CD4-positive, alpha-beta T cell (primary cell): ENCODE measurements at regions of chr15 and their contacts with region 1.

Region 1: GRCh38 chr15:64010719-64011118 is 35.6 kb downstream of the DAPK2 start:
- DNase-seq: peak; percentile 75 to 95 (median 83)
- ATAC-seq: peak; percentile 93
- H3K4me3 ChIP-seq: no peak overlapping the region
- H3K4me3 Mint-ChIP-seq: peak overlapping the region; percentile 66
- H3K27ac ChIP-seq: peak overlapping the region; percentile 64 to 72
- H3K27ac Mint-ChIP-seq: peak overlapping the region; percentile 93
- H3K4me1 ChIP-seq: peaks cover 38% of the 10 kb centered on the region
- H3K4me1 Mint-ChIP-seq: peaks cover 41% of the 10 kb centered on the region
- H3K27me3 ChIP-seq: no peaks in the 10 kb centered on the region
- H3K27me3 Mint-ChIP-seq: no peaks in the 10 kb centered on the region
- CTCF ChIP-seq: peak; percentile 52

Region 2: GRCh38 chr15:63752075-63752684 is 258.5 kb before region 1 on chr15:
- CTCF ChIA-PET with region 1: interaction called, 7 read pairs
- POLR2A ChIA-PET with region 1: interaction called, 16 read pairs
- intact Hi-C with region 1: loop called (anchors 2 kb)
- DNase-seq: peak in 9 of 14 experiments; percentile 15 to 74 (median 24)
- ATAC-seq: peak; percentile 73
- H3K4me3 ChIP-seq: no peak overlapping the region
- H3K4me3 Mint-ChIP-seq: no peak overlapping the region
- H3K27ac ChIP-seq: no peak overlapping the region
- H3K27ac Mint-ChIP-seq: peak overlapping the region; percentile 3
- H3K4me1 ChIP-seq: no peaks in the 10 kb centered on the region
- H3K4me1 Mint-ChIP-seq: peaks cover 6% of the 10 kb centered on the region
- H3K27me3 ChIP-seq: no peaks in the 10 kb centered on the region
- H3K27me3 Mint-ChIP-seq: no peaks in the 10 kb centered on the region
- CTCF ChIP-seq: peak; percentile 80

Region 3: GRCh38 chr15:63826528-63826927 is 184.2 kb before region 1 on chr15:
- CTCF ChIA-PET with region 1: no interaction called
- POLR2A ChIA-PET with region 1: interaction called, 10 read pairs
- intact Hi-C with region 1: loop called (anchors 5 kb)
- DNase-seq: peak in 4 of 14 experiments; percentile 45 to 75 (median 66)
- ATAC-seq: no peak
- H3K4me3 ChIP-seq: no peak overlapping the region
- H3K4me3 Mint-ChIP-seq: peak overlapping the region; percentile 74
- H3K27ac ChIP-seq: no peak overlapping the region
- H3K27ac Mint-ChIP-seq: peak overlapping the region; percentile 62
- H3K4me1 ChIP-seq: peaks cover 21% of the 10 kb centered on the region
- H3K4me1 Mint-ChIP-seq: peaks cover 91% of the 10 kb centered on the region
- H3K27me3 ChIP-seq: no peaks in the 10 kb centered on the region
- H3K27me3 Mint-ChIP-seq: no peaks in the 10 kb centered on the region
- CTCF ChIP-seq: peak; percentile 62

Region 4: GRCh38 chr15:63945007-63945788 is 65.5 kb before region 1 on chr15:
- CTCF ChIA-PET with region 1: interaction called, 23 read pairs
- POLR2A ChIA-PET with region 1: interaction called, 3 read pairs
- intact Hi-C with region 1: loop called in 1 of 2 experiments (anchors 2 kb)
- DNase-seq: peak; percentile 44 to 77 (median 59)
- ATAC-seq: peak; percentile 98
- H3K4me3 ChIP-seq: no peak overlapping the region
- H3K4me3 Mint-ChIP-seq: no peak overlapping the region
- H3K27ac ChIP-seq: no peak overlapping the region
- H3K27ac Mint-ChIP-seq: peak overlapping the region; percentile 21
- H3K4me1 ChIP-seq: peaks cover 13% of the 10 kb centered on the region
- H3K4me1 Mint-ChIP-seq: peaks cover 16% of the 10 kb centered on the region
- H3K27me3 ChIP-seq: no peaks in the 10 kb centered on the region
- H3K27me3 Mint-ChIP-seq: no peaks in the 10 kb centered on the region
- CTCF ChIP-seq: peak; percentile 93